H1 (cell line): ENCODE measurements at regions of chr9 and their contacts with region 1.

Region 1: DNA sequence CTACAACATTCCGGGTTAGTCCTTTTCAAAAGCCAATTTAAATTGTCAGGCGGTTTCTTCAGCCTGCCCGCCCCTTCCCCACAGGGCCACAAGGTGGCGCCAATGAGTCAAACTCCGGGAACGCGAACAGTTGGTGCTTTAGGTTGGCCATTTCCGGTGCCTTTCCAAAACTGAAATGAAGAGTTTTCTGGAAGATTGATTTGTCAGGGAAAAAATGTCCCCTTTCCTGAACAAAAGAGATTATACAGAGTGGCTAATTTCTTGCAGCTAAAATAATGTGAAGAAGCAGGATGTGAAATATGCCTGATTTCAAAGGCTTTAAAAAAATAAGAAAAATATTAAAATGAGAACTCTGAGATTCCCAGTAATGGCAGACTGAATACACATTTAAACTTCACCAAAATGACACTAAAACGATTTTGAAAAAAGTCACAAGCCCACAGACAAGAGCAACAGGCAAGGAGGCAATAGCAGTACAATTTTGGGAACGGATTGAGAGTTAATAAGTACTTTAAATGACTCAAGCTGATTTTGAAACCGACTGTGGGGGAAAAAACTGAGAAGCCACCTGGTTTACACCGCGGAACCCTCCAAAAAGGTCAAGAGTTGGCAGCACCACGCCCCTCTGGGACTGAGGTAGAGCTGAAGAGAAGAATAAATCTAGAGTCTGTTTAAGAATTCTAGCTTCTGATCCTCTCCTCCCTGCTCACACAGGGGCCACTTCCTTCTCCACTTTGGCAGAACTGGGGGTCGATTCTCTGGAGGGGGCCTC is 45.7 kb downstream of the SLC46A2 start:
- DNase-seq: peak in 1 of 2 experiments; percentile 95
- H3K4me3 ChIP-seq: no peak overlapping the region
- H3K27ac ChIP-seq: no peak overlapping the region
- H3K4me1 ChIP-seq: peaks cover 7 to 19% (median 13%) of the 10 kb centered on the region in 4 experiments
- H3K27me3 ChIP-seq: no peaks in the 10 kb centered on the region
- CTCF ChIP-seq: peak; percentile 85 to 92 (median 91)
- EP300 ChIP-seq: no peak
- POLR2A ChIP-seq: no peak
- RAD21 ChIP-seq: peak; percentile 78 to 86

Region 2: GRCh38 chr9:112858625-112859147 is 13.7 kb after region 1 on chr9:
- CTCF ChIA-PET with region 1: interaction called, 12 read pairs
- POLR2A ChIA-PET with region 1: no interaction called
- DNase-seq: no peak
- H3K4me3 ChIP-seq: no peak overlapping the region
- H3K27ac ChIP-seq: no peak overlapping the region
- H3K4me1 ChIP-seq: no peaks in the 10 kb centered on the region
- H3K27me3 ChIP-seq: no peaks in the 10 kb centered on the region
- CTCF ChIP-seq: no peak
- EP300 ChIP-seq: no peak
- POLR2A ChIP-seq: no peak
- RAD21 ChIP-seq: no peak

Region 3: GRCh38 chr9:112905084-112905483 is 60.1 kb after region 1 on chr9:
- CTCF ChIA-PET with region 1: interaction called, 62 read pairs
- POLR2A ChIA-PET with region 1: interaction called, 3 read pairs
- DNase-seq: no peak
- H3K4me3 ChIP-seq: no peak overlapping the region
- H3K27ac ChIP-seq: no peak overlapping the region
- H3K4me1 ChIP-seq: no peaks in the 10 kb centered on the region
- H3K27me3 ChIP-seq: no peaks in the 10 kb centered on the region; a peak in 1 of 7 replicates
- CTCF ChIP-seq: no peak
- EP300 ChIP-seq: no peak
- POLR2A ChIP-seq: no peak
- RAD21 ChIP-seq: no peak

Region 4: GRCh38 chr9:112917625-112918362 is 72.8 kb after region 1 on chr9:
- CTCF ChIA-PET with region 1: no interaction called
- POLR2A ChIA-PET with region 1: no interaction called
- DNase-seq: no peak
- H3K4me3 ChIP-seq: no peak overlapping the region
- H3K27ac ChIP-seq: no peak overlapping the region
- H3K4me1 ChIP-seq: no peaks in the 10 kb centered on the region
- H3K27me3 ChIP-seq: peaks cover 0 to 5% (median 2%) of the 10 kb centered on the region in 4 experiments; a peak in 3 of 7 replicates
- CTCF ChIP-seq: no peak
- EP300 ChIP-seq: no peak
- POLR2A ChIP-seq: no peak
- RAD21 ChIP-seq: no peak

Region 5: DNA sequence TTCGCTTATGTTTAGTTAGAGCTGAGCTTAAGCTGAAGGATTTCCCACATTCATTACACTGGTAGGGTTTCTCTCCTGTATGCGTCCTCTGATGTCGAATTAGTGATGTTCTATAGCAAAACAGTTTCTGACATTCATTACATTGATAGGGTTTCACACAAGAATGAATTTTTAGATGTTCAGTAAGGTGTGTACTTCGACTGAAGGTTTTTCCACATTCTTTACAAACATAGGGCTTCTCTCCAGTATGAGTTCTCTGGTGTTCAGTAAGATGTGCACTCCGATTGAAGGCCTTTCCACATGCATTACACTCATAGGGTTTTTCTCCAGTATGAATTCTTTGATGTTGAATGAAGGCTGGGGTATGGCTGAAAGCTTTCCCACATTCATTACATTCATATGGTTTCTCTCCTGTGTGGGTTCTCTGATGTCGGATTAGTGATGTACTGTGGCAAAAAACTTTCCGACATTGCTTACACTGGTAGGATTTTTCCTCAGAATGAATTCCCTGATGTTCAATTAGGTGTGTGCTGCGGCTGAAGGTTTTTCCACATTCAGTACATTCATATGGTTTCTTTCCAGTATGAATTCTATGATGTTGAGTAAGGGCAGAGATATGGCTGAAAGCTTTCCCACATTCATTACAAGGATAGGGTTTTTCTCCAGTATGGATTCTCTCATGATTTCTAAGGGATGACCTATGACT is 152.4 kb after region 1 on chr9:
- CTCF ChIA-PET with region 1: no interaction called
- POLR2A ChIA-PET with region 1: no interaction called
- DNase-seq: no peak
- H3K4me3 ChIP-seq: peak overlapping the region in 1 of 4 experiments; percentile 16; a peak in 1 of 8 replicates
- H3K27ac ChIP-seq: no peak overlapping the region
- H3K4me1 ChIP-seq: no peaks in the 10 kb centered on the region
- H3K27me3 ChIP-seq: no peaks in the 10 kb centered on the region
- CTCF ChIP-seq: no peak
- EP300 ChIP-seq: no peak
- POLR2A ChIP-seq: no peak
- RAD21 ChIP-seq: no peak